Psoas muscle (tissue), 8 donors: ENCODE measurements at regions of chr1 and their contacts with region 1.

Region 1: DNA sequence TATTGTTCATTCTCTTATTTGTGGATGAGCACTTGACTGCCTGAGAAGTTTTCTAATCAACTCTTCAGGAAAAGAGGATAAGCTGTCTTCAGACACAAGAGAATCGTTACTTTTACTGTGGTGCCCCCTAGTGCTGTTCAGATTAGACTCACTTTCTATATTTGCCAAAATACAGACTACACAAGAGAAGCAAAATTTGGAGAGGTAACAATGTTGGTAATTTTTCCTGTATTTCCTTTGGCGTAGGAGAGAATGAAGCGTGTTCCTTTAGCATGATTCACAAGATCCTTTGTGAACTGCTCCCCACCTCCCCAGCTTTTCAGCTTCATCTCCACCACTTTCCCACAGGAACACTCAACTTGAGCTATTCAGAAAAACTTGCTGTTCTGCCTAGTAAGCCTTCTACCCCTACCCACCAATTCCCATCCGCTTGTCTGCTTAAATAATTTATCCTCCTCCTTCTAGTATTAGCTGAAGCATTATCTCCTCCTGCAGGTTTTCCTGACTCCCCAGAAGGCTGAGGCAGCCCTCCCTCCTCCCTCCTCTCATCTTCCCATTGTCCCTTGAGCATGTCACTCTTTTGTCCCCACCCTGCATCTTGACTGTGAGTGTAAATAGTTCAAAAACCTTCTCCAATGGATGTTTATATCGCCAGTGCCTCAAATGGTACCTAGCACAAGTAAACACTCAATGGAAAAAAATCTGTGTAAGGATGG is 4.5 kb downstream of the TNFSF4 start:
- DNase-seq: no peak
- ATAC-seq: peak in 3 of 4 donors; percentile 28 to 72 (median 57)
- H3K4me3 ChIP-seq: no peak overlapping the region
- H3K27ac ChIP-seq: no peak overlapping the region
- H3K4me1 ChIP-seq: no peaks in the 10 kb centered on the region
- H3K27me3 ChIP-seq: no peaks in the 10 kb centered on the region
- CTCF ChIP-seq: peak; percentile 56

Region 2: GRCh38 chr1:172826096-172826743 is 376.4 kb before region 1 on chr1:
- intact Hi-C with region 1: loop called (anchors 2 to 10 kb)
- DNase-seq: no peak
- ATAC-seq: peak; percentile 25 to 73 (median 44)
- H3K4me3 ChIP-seq: peak overlapping the region; percentile 41
- H3K27ac ChIP-seq: peak overlapping the region; percentile 27
- H3K4me1 ChIP-seq: no peaks in the 10 kb centered on the region
- H3K27me3 ChIP-seq: no peaks in the 10 kb centered on the region
- CTCF ChIP-seq: peak; percentile 50

Region 3: DNA sequence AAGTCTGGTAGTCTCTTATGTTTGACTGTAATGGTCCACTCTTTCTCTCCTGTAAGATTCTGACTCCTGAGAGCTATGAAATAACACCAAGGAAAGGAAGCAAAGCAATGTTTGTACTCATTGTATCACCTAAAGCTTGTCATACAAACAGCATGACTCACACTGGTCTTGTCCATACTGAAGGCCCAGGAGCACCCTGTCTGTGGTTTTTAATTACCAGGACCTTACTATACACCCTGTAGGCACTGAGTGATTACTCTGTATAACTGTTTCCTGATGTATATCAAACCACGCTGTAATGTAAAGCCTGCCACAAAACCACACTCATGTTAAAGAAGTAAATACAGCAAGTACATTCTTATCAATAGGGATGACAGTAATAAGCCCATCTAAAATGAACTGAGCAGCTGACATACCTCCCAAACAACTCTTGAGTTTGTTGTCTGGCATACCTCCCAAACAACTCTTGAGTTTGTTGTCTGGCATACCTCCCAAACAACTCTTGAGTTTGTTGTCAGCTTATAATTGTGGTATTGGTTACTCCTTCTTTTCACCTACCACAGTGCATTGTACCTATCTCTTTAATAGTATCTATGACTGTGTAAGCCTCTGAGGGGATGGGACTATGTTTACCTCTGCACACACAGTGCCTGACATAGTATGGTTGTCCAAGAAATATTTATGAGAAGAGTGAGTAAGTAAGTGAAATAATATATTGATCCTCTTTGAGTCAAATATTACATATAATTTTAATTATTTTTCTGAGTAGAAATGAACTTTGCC is 140.2 kb before region 1 on chr1:
- intact Hi-C with region 1: no loop called
- DNase-seq: no peak
- ATAC-seq: no peak
- H3K4me3 ChIP-seq: no peak overlapping the region
- H3K27ac ChIP-seq: no peak overlapping the region
- H3K4me1 ChIP-seq: no peaks in the 10 kb centered on the region
- H3K27me3 ChIP-seq: no peaks in the 10 kb centered on the region
- CTCF ChIP-seq: no peak